GM10248 (cell line): ENCODE measurements at regions of chr11 and their contacts with region 1.

Region 1: DNA sequence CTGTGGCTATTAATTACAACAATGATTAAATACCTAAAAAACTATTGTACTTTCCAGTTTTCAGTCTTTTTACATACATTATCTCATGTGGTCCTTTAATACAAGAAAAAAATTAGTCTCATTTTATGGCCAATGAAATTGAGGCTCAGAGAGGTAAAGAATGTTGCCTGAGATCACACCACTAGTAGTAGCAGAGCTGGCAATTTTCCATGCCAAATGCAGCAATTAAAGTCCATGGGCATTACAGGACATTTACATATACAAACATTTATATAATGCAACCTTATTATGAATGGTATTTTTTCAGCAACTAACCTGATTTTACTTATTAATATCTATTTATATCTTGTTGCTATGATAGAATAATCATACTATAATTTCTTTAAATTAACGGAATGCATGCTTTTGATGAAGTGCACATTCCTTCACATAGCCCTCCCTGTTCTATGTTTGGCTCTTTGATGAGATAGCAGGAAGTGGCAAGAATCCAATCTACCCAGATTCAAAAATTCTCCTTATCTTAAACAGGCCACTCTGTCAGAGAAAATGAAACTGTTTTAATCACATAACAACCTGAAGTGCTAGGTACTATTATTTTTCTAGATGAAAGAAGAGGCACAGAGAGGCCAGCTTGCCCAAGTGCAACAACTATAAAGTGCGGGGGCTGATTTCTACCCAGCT is 120.9 kb upstream of the LDLRAD3 start:
- DNase-seq: no peak
- CTCF ChIP-seq: no peak

Region 2: DNA sequence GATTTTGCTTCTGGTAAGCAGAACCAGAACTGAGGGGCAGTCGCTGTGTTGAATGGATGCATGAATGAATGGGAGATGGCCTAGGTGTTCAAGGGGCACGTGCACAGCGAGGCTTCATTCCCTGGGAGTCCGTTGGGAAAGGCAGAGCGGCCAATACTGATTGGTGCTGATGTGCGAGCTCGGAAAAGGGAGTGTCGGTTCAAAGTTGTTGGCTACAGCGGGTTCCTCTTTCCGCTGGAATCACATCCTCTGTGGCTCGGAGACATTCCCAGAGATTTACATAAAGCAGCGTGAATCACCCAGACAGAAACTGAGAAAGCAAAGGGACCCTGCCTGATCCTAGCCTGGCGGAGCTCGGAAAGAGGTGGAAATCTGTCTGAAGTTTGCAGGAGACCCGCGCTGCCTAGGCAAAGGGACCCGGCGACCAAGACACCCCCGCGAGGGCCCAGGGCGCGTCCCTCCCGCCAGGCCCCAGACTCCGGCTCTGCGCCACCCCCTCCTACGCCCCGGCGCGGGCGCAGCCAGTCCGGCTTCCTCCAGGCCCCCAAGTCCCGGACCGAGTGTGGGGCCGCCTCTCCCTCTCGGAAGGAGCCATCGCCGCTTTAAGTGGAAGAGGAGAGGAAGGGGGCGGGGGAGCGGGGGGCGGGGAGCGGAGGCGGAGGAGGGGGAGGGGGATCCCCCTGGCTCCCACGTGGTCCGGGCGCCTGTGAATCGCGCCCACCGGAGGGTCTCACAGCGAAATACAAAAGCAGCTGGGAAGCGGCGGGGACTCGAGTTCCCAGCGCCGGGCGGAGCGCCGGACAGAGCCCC is 205.1 kb before region 1 on chr11 and contains the start of gene FJX1:
- CTCF ChIA-PET with region 1: interaction called, 28 read pairs
- POLR2A ChIA-PET with region 1: no interaction called
- DNase-seq: peak; percentile 76
- CTCF ChIP-seq: no peak

Region 3: DNA sequence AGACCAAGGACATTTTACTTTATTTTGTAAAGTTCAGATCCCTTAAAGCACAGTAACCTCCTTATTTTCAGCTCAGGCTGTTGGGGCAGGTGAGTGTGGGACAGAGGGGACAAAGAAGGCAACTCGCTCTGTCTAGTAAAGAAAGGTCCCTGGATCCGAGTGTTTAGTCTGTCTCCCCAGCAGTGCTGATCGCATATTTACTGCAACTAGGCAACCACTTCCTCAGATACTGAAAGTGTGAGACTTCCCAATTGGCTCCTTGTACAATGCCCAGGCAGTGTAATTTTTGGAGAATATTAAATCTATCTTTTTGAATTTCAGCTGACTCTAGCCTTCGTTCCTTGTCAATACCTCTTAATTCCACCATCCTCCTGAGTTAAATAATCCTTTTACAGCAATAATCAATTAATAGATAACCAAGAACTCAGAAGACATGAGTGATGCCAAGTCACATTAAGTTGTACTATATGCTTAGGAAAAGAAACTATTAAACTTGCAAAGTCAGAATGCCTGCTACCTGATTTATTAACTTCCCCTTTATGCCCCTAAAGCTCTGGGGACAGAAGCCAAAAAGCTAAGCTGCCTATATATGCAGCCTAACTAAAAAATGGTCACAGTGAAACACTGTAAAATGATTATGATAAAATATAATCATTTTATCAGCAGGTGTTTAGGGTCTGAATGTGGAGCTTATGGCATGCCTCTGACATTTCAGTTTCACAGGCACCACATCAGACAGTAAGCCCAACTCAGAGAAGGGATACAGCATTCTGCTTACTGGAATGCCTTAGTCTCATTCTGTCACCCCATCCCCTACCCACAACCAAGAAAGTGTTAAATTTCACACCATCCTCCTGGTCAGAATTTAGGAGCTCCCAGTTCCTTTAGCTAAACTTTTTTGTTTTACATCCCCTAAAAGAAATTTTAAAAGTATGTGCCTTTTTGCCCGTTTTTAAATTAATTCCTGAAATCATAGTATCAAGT is 21.7 kb before region 1 on chr11:
- CTCF ChIA-PET with region 1: interaction called, 57 read pairs
- POLR2A ChIA-PET with region 1: no interaction called
- DNase-seq: peak; percentile 24
- CTCF ChIP-seq: no peak

Region 4: DNA sequence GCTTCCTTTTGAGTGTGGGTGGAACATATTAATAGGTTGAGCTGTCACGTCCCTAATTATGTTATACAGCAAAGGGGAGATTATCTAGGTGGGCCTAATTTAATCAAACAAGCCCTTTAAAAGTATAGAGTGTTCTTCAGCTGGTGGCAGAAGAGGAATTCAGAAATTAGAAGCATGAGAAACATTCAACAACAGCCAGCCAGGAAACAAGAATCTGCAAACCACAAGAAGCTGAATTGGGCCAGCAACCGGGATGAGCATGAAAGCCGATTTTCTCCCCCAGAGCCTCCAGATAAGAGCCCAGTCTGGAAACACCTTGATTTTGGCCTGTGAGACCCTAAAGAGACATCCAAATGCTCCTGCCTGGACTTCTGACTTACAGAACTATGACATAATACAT is 15.1 kb after region 1 on chr11:
- CTCF ChIA-PET with region 1: interaction called, 59 read pairs
- POLR2A ChIA-PET with region 1: no interaction called
- DNase-seq: no peak
- CTCF ChIP-seq: no peak

Region 5: DNA sequence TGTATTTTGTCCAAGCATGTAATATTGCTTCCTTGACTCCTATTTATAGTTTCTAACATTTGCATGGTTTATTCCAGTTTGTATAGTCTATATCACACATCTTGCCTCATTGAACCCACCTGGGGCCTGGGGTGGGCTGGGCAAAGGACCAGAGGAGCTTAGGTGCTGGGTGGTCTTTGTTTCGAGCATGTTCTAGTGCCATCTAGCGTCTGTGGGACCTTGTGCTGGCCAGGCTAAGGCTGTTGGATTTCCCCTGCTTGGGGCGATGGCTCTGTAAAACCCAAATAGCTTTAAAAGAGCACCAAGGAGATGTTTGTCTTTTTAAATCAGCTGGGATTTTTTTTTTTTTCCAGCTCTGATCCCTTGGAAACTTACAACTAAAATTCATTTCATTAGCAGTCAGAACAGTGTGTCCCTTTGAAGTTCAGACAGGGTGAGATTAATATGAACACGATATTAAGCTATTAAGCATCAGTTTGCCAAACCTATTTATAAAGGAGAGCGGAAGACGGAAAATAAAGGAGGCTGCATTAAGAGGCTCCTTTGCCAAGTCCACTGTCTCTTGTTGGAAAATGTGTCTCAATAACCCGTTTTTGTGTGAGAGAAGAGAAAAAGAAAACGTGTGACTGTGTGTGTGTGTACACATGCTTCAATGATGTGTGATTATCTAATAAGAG is 308.9 kb after region 1 on chr11:
- CTCF ChIA-PET with region 1: interaction called, 21 read pairs
- POLR2A ChIA-PET with region 1: no interaction called
- DNase-seq: peak; percentile 45
- CTCF ChIP-seq: peak; percentile 82